ENCODE measurements at regions of chr2 and their contacts with region 1.

Region 1: GRCh38 chr2:204274991-204275390 is 270.3 kb upstream of the PARD3B start:
- DNase-seq: no peak
- ATAC-seq: no peak
- H3K4me3 ChIP-seq: no peak overlapping the region
- H3K27ac ChIP-seq: no peak overlapping the region
- H3K4me1 ChIP-seq: no peaks in the 10 kb centered on the region
- H3K27me3 ChIP-seq: no peaks in the 10 kb centered on the region; the same call in 1 of the 2 replicates
- CTCF ChIP-seq: no peak
- POLR2A ChIP-seq: no peak
- RAD21 ChIP-seq: no peak

Region 2: DNA sequence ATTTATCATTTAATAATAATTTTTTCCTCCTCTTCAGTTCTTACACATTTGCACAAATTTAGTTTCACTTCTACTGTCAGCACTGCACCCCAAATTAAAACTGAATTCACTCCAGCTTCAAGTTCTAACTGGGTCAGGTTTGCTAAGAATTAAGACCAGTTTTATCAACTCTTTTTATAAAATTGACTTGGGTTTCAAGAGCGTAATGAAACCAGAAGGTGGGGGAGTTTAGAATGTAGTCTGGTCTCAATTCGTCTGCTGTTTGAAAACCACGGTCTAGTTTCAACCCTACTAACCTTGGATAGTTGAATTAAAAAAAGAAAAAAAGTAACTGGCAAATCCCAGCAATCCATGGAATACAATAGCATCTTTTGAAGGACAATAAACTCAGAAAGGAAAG is 421.7 kb before region 1 on chr2:
- CTCF ChIA-PET with region 1: no interaction called
- POLR2A ChIA-PET with region 1: no interaction called
- RAD21 ChIA-PET with region 1: no interaction called
- intact Hi-C with region 1: loop called (anchors 5 kb)
- DNase-seq: no peak
- ATAC-seq: no peak
- H3K4me3 ChIP-seq: no peak overlapping the region
- H3K27ac ChIP-seq: no peak overlapping the region
- H3K4me1 ChIP-seq: no peaks in the 10 kb centered on the region
- H3K27me3 ChIP-seq: no peaks in the 10 kb centered on the region
- CTCF ChIP-seq: no peak
- POLR2A ChIP-seq: no peak
- RAD21 ChIP-seq: no peak

Region 3: DNA sequence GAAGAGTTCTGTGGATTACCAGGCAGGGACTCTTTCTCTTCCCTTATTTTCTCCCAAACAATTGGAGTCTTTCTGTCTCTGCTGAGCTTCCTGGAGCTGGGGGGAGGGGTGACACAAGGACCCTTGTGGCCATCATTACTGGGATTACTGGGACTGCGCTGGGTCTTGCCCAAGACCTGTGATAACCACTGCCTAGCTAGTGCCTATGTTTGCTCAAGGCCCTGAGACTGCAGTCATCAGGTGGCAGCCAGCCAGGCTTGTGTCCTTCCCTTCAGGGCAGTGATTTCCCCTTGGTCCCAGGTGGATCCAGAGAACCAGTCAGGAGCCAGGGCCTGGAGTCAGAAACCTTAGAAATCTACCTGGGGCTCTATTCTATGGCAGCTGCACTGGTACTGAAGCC is 625.9 kb after region 1 on chr2:
- CTCF ChIA-PET with region 1: no interaction called
- POLR2A ChIA-PET with region 1: no interaction called
- RAD21 ChIA-PET with region 1: no interaction called
- intact Hi-C with region 1: no loop called
- DNase-seq: no peak
- ATAC-seq: no peak
- H3K4me3 ChIP-seq: no peak overlapping the region
- H3K27ac ChIP-seq: no peak overlapping the region
- H3K4me1 ChIP-seq: no peaks in the 10 kb centered on the region
- H3K27me3 ChIP-seq: no peaks in the 10 kb centered on the region
- CTCF ChIP-seq: no peak
- POLR2A ChIP-seq: no peak
- RAD21 ChIP-seq: no peak